Right ventricle myocardium inferior (tissue), 1 donor: ENCODE measurements at regions of chr21 and their contacts with region 1.

Region 1: GRCh38 chr21:33588485-33589335 is at the start of gene DONSON:
- DNase-seq: peak; percentile 95
- ATAC-seq: peak; percentile 98
- total RNA-seq, gene DONSON: 6.6 TPM

Region 2: GRCh38 chr21:33308586-33309490 is 279.9 kb before region 1 on chr21:
- intact Hi-C with region 1: no loop called
- DNase-seq: no peak
- ATAC-seq: no peak

Region 3: GRCh38 chr21:33479679-33480480 is 108.8 kb before region 1 on chr21 and contains the start of gene TMEM50B:
- intact Hi-C with region 1: no loop called
- DNase-seq: peak; percentile 98
- ATAC-seq: peak; percentile 99
- total RNA-seq, gene TMEM50B: 35.1 TPM

Region 4: GRCh38 chr21:33542640-33543504 is 45.8 kb before region 1 on chr21 and contains the start of gene SON:
- intact Hi-C with region 1: loop called (anchors 5 kb)
- DNase-seq: peak; percentile 100
- ATAC-seq: peak; percentile 99
- total RNA-seq, gene SON: 136 TPM